MCF 10A (cell line): ENCODE measurements at regions of chr6 and their contacts with region 1.

Region 1: GRCh38 chr6:88952065-88952973 is 11.1 kb downstream of the RNGTT start:
- DNase-seq: peak; percentile 23
- H3K4me3 Mint-ChIP-seq: no peak overlapping the region
- H3K27ac Mint-ChIP-seq: no peak overlapping the region
- H3K4me1 Mint-ChIP-seq: peaks cover 7% of the 10 kb centered on the region
- H3K27me3 Mint-ChIP-seq: no peaks in the 10 kb centered on the region
- CTCF ChIP-seq: no peak

Region 2: GRCh38 chr6:88963139-88964090 is 11.1 kb after region 1 on chr6 and contains the start of gene RNGTT:
- CTCF ChIA-PET with region 1: interaction called, 3 read pairs
- POLR2A ChIA-PET with region 1: interaction called, 15 read pairs
- intact Hi-C with region 1: no loop called
- DNase-seq: peak; percentile 99
- H3K4me3 Mint-ChIP-seq: peak within 1 kb of the TSS; percentile 93
- H3K27ac Mint-ChIP-seq: peak within 1 kb of the TSS; percentile 92
- H3K4me1 Mint-ChIP-seq: peaks cover 14% of the 10 kb centered on the region
- H3K27me3 Mint-ChIP-seq: no peaks in the 10 kb centered on the region
- CTCF ChIP-seq: no peak
- total RNA-seq, gene RNGTT: 14.6 and 20.6 TPM in 2 replicates

Region 3: DNA sequence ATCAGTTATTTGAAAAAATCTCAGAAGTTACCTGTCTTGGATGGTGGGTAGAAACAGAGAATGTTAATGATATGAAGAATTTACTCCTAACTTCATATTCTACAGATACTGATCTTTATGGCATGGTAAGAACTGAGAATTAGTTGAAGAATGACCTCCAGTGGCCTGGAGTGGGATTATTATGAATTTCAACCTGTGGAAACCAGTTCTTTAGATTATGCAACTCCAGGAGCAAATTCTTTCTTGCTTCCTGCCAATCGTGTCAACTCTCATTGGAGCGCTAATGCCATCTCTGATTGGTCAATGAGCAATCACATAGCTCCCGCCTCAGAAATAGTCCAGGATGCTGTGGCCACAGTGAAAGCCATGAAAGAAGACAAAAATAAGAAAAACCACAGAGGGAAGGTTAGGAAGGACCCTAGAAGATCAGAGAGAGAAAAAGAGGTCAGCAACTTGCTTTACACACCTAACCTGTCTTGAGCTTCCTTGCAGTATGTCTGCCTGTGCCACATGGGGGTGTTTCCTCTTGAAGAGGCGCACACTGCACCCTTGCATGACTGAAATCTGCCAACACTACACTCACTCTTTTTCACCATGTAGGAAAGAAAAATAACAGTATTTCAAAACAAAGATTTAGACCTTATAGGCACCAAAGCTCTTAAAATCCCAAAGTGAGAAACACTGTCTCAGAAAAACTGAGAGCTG is 645.8 kb after region 1 on chr6:
- CTCF ChIA-PET with region 1: no interaction called
- POLR2A ChIA-PET with region 1: no interaction called
- intact Hi-C with region 1: no loop called
- DNase-seq: peak; percentile 76
- H3K4me3 Mint-ChIP-seq: peak overlapping the region; percentile 58
- H3K27ac Mint-ChIP-seq: no peak overlapping the region
- H3K4me1 Mint-ChIP-seq: peaks cover 6% of the 10 kb centered on the region
- H3K27me3 Mint-ChIP-seq: peaks cover 23% of the 10 kb centered on the region
- CTCF ChIP-seq: no peak